ENCODE measurements at regions of chr11 and their contacts with region 1.

Region 1: DNA sequence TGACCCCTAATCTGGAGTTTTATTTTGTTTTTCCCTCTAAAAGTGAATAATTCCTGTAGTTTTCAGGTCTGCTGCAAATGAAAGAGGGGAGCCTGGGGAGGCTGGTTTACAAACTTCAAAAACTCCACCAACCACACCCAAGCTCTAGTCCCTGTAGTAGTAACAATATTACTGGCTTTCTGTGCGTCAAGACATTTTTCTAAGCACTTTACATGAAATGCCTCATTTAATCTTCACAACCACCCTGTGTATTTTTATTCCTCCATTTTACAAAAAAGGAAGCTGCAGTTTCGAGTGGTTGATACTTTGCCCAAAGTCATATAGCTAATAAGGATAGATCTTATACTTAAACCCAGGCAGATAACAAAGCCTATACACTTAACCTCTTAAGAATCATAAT is 23.5 kb downstream of the CTNND1 start:
- DNase-seq: no peak
- ATAC-seq: peak; percentile 87
- H3K4me3 Mint-ChIP-seq: peak overlapping the region; percentile 75
- H3K27ac Mint-ChIP-seq: peak overlapping the region; percentile 92
- H3K4me1 Mint-ChIP-seq: peaks cover 67% of the 10 kb centered on the region
- H3K27me3 Mint-ChIP-seq: no peaks in the 10 kb centered on the region
- CTCF ChIP-seq: no peak

Region 2: GRCh38 chr11:57751676-57752253 is 33.3 kb before region 1 on chr11 and contains the start of gene BTBD18:
- CTCF ChIA-PET with region 1: interaction called, 11 read pairs
- POLR2A ChIA-PET with region 1: interaction called, 5 read pairs
- intact Hi-C with region 1: no loop called
- DNase-seq: no peak
- ATAC-seq: peak; percentile 66
- H3K4me3 Mint-ChIP-seq: no peak within 1 kb of the TSS
- H3K27ac Mint-ChIP-seq: peak within 1 kb of the TSS; percentile 66
- H3K4me1 Mint-ChIP-seq: peaks cover 9% of the 10 kb centered on the region
- H3K27me3 Mint-ChIP-seq: no peaks in the 10 kb centered on the region
- CTCF ChIP-seq: no peak
- total RNA-seq, gene BTBD18: not detected in 2 replicates

Region 3: GRCh38 chr11:57761301-57762234 is 23.5 kb before region 1 on chr11 and contains the start of gene CTNND1:
- CTCF ChIA-PET with region 1: interaction called, 3 read pairs
- POLR2A ChIA-PET with region 1: interaction called, 15 read pairs
- intact Hi-C with region 1: no loop called
- DNase-seq: no peak
- ATAC-seq: peak; percentile 82
- H3K4me3 Mint-ChIP-seq: peak within 1 kb of the TSS; percentile 93
- H3K27ac Mint-ChIP-seq: peak within 1 kb of the TSS; percentile 77
- H3K4me1 Mint-ChIP-seq: peaks cover 30% of the 10 kb centered on the region
- H3K27me3 Mint-ChIP-seq: no peaks in the 10 kb centered on the region
- CTCF ChIP-seq: no peak
- total RNA-seq, gene CTNND1: 34.2 and 42.3 TPM in 2 replicates

Measured in activated B cell treated with CpG ODN at 0.5 μM for 24 hours (primary cell).